ENCODE measurements at regions of chr17 and their contacts with region 1.

Region 1: DNA sequence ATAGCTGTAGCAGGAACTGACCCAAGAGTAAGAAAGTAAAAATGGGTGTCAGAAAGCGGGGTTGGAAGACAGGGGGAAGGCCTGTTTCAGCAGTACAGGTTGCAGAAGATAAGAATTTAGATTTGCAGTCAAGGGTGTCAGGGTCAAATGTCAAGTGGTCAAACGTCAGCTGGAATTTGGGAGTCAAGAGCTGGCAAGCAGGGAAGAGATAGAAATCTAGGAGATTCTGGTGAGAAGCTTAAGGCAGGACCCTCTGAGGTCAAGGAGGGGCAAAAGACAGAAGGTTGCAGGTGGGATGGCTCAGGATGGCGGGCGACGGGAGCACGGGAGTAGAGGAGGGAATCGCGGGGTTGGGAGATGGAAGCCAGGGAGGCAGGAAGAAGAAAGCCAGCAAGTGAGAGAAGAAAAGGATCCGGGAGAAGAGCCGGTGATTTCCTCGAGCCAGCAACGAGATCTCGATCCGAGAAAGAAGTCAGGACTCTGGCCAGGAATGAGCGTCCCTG is 335 bp downstream of the SLC25A35 start:
- DNase-seq: no peak
- H3K4me3 Mint-ChIP-seq: peak overlapping the region; percentile 89
- H3K27ac Mint-ChIP-seq: peak overlapping the region; percentile 83
- H3K4me1 Mint-ChIP-seq: peaks cover 53% of the 10 kb centered on the region
- H3K27me3 Mint-ChIP-seq: no peaks in the 10 kb centered on the region

Region 2: DNA sequence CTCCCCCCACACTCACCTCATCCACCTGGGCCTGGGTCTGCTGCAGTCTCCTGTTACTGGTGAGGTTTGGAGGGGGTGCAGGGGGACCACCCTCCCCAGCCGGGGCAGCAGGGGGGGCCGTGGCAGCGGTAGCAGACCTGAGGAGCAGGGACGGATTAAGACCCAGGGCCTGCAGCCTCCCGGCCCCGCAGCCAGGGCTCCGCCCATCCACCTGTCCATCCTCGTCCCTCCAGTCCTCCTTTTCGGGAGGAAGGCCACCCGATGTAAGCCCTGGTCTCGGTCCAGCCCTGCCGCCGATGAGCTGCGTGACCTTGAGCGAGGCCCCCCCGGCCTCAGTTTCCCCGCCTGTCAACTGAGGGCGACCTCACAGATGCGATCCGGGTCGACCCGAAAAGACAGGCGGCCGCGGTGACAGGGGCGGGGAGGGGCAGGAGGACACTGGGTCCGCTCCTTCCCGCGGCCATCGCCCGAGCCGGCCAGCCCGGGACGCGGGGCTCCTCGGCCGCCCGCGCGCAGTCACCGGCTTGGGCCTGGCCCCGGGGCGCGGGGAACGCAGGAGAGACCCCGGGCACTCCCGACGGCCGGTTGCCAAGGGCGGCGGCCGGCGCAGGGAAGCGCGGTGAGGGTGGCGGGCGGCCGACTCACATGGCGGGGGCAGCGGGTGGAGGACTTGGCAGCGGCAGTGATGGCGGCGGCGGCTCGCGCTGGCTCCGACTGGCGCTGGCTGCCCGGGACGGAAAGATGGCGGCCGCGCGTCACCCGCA is 132.4 kb before region 1 on chr17 and contains the start of gene VAMP2:
- CTCF ChIA-PET with region 1: interaction called, 6 read pairs
- POLR2A ChIA-PET with region 1: interaction called, 10 read pairs
- DNase-seq: peak; percentile 89
- H3K4me3 Mint-ChIP-seq: peak within 1 kb of the TSS; percentile 81
- H3K27ac Mint-ChIP-seq: peak within 1 kb of the TSS; percentile 98
- H3K4me1 Mint-ChIP-seq: peaks cover 59% of the 10 kb centered on the region
- H3K27me3 Mint-ChIP-seq: no peaks in the 10 kb centered on the region
- total RNA-seq, gene VAMP2: 75.2 to 79.1 TPM

Region 3: GRCh38 chr17:8209909-8210760 is 84.7 kb before region 1 on chr17 and contains the start of gene AURKB:
- CTCF ChIA-PET with region 1: interaction called, 6 read pairs
- POLR2A ChIA-PET with region 1: interaction called, 18 read pairs
- DNase-seq: peak; percentile 94
- H3K4me3 Mint-ChIP-seq: peak within 1 kb of the TSS; percentile 87
- H3K27ac Mint-ChIP-seq: peak within 1 kb of the TSS; percentile 86
- H3K4me1 Mint-ChIP-seq: peaks cover 39% of the 10 kb centered on the region
- H3K27me3 Mint-ChIP-seq: no peaks in the 10 kb centered on the region
- total RNA-seq, gene AURKB: 160 to 167 TPM

Region 4: DNA sequence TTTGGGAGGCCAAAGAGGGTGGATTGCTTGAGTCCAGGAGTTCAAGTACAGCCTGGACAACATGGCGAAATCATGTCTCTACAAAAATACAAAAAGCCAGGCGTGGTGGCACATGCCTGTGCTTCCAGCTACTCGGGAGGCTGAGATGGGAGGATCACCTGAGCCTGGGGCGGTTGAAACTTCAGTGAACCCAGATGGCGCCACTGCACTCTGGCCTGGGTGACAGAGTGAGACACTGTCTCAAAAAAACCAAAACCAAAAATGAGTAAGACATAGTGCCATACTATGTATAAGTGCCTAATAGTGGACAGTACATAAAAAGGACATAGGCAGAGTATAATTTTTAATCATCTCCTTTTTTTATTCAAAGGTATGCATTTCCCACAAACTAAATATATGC is 51.0 kb before region 1 on chr17:
- CTCF ChIA-PET with region 1: interaction called, 22 read pairs
- POLR2A ChIA-PET with region 1: interaction called, 132 read pairs
- DNase-seq: peak; percentile 50
- H3K4me3 Mint-ChIP-seq: no peak overlapping the region
- H3K27ac Mint-ChIP-seq: peak overlapping the region; percentile 61
- H3K4me1 Mint-ChIP-seq: peaks cover 48% of the 10 kb centered on the region
- H3K27me3 Mint-ChIP-seq: no peaks in the 10 kb centered on the region

Region 5: DNA sequence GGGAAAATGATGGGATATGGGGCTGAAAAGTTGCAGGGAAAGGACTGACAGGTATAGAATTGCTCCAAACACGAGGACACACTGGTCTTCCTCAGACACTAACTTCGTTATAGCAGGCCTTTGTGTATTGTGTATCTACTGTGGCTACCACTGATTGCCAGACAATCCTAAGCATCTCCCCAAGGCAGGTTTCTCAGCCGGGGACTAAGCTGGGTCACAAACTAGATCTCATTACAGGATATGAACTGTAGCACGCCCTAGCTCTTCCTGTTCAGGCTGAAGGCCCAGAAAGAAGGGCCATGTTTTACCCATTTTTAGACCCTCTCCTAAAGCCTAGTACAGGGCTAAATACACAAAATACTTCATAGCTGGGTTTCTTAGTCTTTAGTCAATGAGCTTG is 11.5 kb before region 1 on chr17:
- CTCF ChIA-PET with region 1: interaction called, 14 read pairs
- POLR2A ChIA-PET with region 1: interaction called, 32 read pairs
- DNase-seq: no peak
- H3K4me3 Mint-ChIP-seq: no peak overlapping the region
- H3K27ac Mint-ChIP-seq: peak overlapping the region; percentile 77
- H3K4me1 Mint-ChIP-seq: peaks cover 39% of the 10 kb centered on the region
- H3K27me3 Mint-ChIP-seq: no peaks in the 10 kb centered on the region